ENCODE measurements at regions of chr7 and their contacts with region 1.

Region 1: GRCh38 chr7:101743241-101743994 is 74.0 kb upstream of the CUX1 start:
- DNase-seq: peak; percentile 78 to 89 (median 84)
- ATAC-seq: peak; percentile 85
- H3K4me3 ChIP-seq: peak overlapping the region; percentile 57
- H3K27ac ChIP-seq: no peak overlapping the region
- H3K4me1 ChIP-seq: peaks cover 7 to 51% of the 10 kb centered on the region in 2 experiments; a peak in 4 of 5 replicates
- H3K27me3 ChIP-seq: peaks cover 2 to 11% of the 10 kb centered on the region in 2 experiments; a peak in 2 of 5 replicates
- CTCF ChIP-seq: peak; percentile 48 to 72 (median 49); a peak in 5 of 6 replicates
- EP300 ChIP-seq: peak; percentile 32; the same call in 1 of the 2 replicates
- POLR2A ChIP-seq: no peak
- RAD21 ChIP-seq: peak; percentile 45 to 51

Region 2: GRCh38 chr7:101602484-101603241 is 140.8 kb before region 1 on chr7:
- CTCF ChIA-PET with region 1: no interaction called
- POLR2A ChIA-PET with region 1: no interaction called
- in situ Hi-C with region 1: no loop called
- intact Hi-C with region 1: no loop called
- DNase-seq: peak; percentile 80 to 91 (median 88)
- ATAC-seq: peak; percentile 97
- H3K4me3 ChIP-seq: no peak overlapping the region
- H3K27ac ChIP-seq: no peak overlapping the region
- H3K4me1 ChIP-seq: peaks cover 0 to 21% of the 10 kb centered on the region in 2 experiments; a peak in 2 of 5 replicates
- H3K27me3 ChIP-seq: peaks cover 0 to 60% of the 10 kb centered on the region in 2 experiments; a peak in 4 of 5 replicates
- CTCF ChIP-seq: peak; percentile 93 to 95 (median 94)
- EP300 ChIP-seq: no peak
- POLR2A ChIP-seq: no peak
- RAD21 ChIP-seq: peak; percentile 84 to 92

Region 3: GRCh38 chr7:101699399-101700167 is 43.8 kb before region 1 on chr7:
- CTCF ChIA-PET with region 1: no interaction called
- POLR2A ChIA-PET with region 1: no interaction called
- in situ Hi-C with region 1: no loop called
- intact Hi-C with region 1: no loop called
- DNase-seq: no peak
- ATAC-seq: peak; percentile 32; the same call in 2 of the 3 replicates
- H3K4me3 ChIP-seq: no peak overlapping the region
- H3K27ac ChIP-seq: no peak overlapping the region
- H3K4me1 ChIP-seq: peaks cover 0 to 7% of the 10 kb centered on the region in 2 experiments; a peak in 2 of 5 replicates
- H3K27me3 ChIP-seq: peaks cover 28 to 56% of the 10 kb centered on the region in 2 experiments
- CTCF ChIP-seq: no peak
- EP300 ChIP-seq: no peak
- POLR2A ChIP-seq: no peak
- RAD21 ChIP-seq: no peak

Region 4: DNA sequence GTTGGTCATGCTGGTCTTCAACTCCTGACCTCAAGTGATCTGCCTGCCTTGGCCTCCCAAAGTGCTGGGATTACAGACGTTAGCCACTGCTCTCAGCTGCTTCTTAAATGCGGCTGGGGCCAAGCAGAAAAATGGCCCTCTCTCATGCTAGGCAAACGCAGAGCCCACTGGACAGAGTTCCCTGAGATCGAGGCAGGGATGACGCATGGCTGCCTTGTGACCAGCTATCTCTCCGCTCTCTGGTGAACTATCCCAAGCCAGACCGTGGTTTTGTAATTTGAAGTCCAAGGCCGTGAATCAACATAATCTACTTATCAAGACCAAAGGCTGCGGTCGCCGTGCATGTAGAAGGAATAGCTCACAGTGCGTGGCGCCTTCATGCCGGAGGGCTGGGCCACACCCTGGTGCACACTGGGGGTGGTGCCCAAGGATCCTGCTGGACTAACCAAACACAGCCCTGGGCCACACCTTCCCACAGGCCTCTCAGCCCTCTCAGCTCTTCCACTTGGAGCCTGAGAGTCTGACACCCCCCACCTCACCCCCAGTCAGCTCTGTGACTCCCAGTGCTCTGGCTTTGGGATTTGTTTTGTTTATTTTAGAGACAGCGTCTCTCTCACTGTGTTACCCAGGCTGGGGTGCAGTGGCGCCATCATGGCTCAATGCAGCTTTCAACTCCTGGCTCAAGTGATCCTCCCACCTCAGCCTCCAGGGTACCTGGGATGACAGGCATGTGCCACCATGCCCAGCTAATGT is 14.0 kb before region 1 on chr7:
- CTCF ChIA-PET with region 1: no interaction called
- POLR2A ChIA-PET with region 1: interaction called, 23 read pairs
- in situ Hi-C with region 1: no loop called
- intact Hi-C with region 1: no loop called
- DNase-seq: peak; percentile 79 to 91 (median 84)
- ATAC-seq: peak; percentile 94
- H3K4me3 ChIP-seq: no peak overlapping the region
- H3K27ac ChIP-seq: peak overlapping the region; percentile 70
- H3K4me1 ChIP-seq: peaks cover 30% of the 10 kb centered on the region in 2 experiments
- H3K27me3 ChIP-seq: peaks cover 2 to 17% of the 10 kb centered on the region in 2 experiments; a peak in 3 of 5 replicates
- CTCF ChIP-seq: no peak
- EP300 ChIP-seq: peak; percentile 73
- POLR2A ChIP-seq: 0 out of 2 replicates have a peak, but pooled peaks have one; percentile 36
- RAD21 ChIP-seq: peak in 1 of 2 experiments; percentile 16; a peak in 1 of 4 replicates

Region 5: DNA sequence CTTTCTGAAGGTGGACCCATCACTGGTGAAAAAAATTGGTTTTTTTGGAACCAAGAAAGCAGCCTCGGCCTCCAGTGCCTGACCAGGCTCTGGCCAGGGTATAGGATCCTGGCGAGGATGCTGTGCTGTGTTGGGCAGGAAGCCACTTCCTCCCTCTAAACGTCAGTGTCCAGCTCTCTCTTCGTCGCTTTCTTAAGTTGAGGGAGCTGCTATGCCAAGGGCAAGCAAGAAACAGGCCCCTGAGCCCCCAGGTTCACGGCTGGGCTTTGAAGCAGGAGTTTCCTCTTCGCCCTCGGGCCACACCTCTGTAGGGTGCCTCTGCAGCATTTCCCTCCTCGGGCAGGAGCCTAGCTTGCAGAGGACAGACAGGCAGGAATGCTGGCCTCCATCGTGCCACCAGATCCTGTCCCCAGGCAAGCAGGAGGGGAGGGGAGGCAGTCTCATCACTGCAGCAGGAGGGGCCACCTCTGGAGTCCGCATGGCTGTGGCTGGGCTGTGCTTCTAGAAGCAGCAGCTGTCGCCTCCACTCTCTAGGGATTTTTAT is 255.3 kb after region 1 on chr7:
- CTCF ChIA-PET with region 1: no interaction called
- POLR2A ChIA-PET with region 1: no interaction called
- in situ Hi-C with region 1: no loop called
- intact Hi-C with region 1: no loop called
- DNase-seq: no peak
- ATAC-seq: peak; percentile 47
- H3K4me3 ChIP-seq: no peak overlapping the region
- H3K27ac ChIP-seq: no peak overlapping the region
- H3K4me1 ChIP-seq: peaks cover 0 to 23% of the 10 kb centered on the region in 2 experiments; a peak in 2 of 5 replicates
- H3K27me3 ChIP-seq: no peaks in the 10 kb centered on the region
- CTCF ChIP-seq: no peak
- EP300 ChIP-seq: no peak
- POLR2A ChIP-seq: no peak
- RAD21 ChIP-seq: no peak